GM12878 (cell line): ENCODE measurements at regions of chr3 and their contacts with region 1.

Region 1: DNA sequence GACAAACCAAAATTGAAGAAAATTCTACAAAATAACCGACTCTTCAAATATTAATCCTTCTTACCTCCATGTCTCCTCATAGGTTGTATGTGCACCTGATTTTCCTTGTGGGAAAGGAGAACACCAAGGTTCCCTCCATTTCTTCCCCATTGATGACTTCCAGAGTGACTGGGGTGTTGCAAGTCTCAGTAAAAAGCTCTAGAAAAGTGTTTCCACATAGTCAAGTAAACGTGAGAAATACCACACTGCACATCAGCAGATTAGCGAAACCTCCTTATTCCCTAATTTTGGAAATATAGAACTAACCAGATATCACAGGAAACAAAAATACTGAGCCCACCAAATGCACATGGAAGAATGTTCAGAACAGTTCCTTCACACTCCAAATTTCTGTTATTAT is 4.9 kb upstream of the RPN1 start:
- DNase-seq: no peak
- ATAC-seq: no peak
- H3K4me3 ChIP-seq: no peak overlapping the region
- H3K27ac ChIP-seq: no peak overlapping the region
- H3K4me1 ChIP-seq: no peaks in the 10 kb centered on the region
- H3K27me3 ChIP-seq: no peaks in the 10 kb centered on the region
- CTCF ChIP-seq: no peak
- EP300 ChIP-seq: no peak
- POLR2A ChIP-seq: no peak
- RAD21 ChIP-seq: no peak

Region 2: DNA sequence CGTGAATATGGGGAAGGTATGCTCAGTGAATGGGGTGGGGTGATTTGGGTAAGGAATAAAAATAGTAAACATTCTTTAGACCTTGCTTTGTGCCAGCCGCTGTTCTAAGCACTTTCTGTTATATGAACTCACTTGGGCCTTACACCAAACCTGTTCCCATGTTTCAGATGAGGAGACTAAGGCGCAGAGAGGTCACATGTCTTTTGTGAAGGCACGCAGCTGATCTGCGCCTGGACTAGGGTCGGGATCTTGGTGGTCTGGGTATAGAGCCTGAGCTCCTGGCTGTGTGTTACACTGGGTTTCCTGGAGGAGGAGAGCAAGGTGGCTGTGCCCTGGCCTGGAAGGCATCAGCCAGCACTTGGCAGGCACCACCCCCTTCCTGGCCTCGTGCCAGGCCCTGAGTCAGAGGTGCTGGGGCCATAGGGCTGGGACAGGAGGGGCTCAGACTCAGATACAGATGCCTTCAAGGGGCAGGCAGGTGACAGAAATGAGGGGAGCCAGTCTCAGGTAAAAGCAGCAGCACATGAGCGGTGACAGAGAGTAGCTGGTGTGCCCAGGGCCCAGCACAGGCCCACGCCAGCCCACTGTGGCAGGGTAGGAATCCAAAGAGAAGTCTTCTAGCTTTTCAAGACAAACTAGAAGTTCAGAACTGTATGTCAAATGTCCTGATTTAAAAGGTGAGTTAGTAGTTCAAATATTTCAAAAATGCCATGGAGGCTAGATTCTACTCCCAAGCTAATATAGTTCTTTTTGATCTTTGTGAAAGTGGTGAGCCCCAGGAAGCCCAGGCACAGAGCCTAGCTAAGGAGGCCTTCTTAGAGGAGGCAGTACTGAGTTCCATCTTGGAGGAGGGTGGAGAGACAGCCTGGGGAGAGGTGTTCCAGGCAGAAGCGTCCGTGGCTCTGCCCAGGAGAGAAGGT is 272.0 kb before region 1 on chr3:
- CTCF ChIA-PET with region 1: no interaction called
- POLR2A ChIA-PET with region 1: no interaction called
- RAD21 ChIA-PET with region 1: no interaction called
- SMC1A ChIA-PET with region 1: no interaction called
- in situ Hi-C with region 1: no loop called
- intact Hi-C with region 1: no loop called
- DNase-seq: no peak
- ATAC-seq: no peak; the same call in 2 of the 3 replicates
- H3K4me3 ChIP-seq: no peak overlapping the region
- H3K27ac ChIP-seq: no peak overlapping the region
- H3K4me1 ChIP-seq: no peaks in the 10 kb centered on the region
- H3K27me3 ChIP-seq: no peaks in the 10 kb centered on the region
- CTCF ChIP-seq: no peak
- EP300 ChIP-seq: no peak
- POLR2A ChIP-seq: no peak
- RAD21 ChIP-seq: no peak

Region 3: DNA sequence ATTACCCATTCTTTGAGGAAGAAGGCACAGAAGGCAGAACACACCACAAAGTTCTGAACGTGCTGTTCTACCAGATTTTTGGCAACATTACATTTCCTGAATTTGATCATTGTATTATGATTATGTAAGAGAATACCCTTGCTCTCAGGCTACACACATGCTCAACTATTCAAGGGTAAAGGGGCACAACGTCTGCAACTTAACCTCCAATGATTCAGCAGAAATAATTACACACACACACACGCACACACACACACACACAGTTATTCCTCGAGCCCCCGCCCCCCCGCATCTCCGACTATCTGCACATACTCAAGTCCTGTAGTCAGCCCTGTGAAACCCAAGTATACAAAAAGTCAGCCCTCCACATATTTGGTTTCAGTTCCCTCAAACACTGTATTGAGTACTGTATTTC is 31.8 kb before region 1 on chr3:
- CTCF ChIA-PET with region 1: interaction called, 3 read pairs
- POLR2A ChIA-PET with region 1: no interaction called
- RAD21 ChIA-PET with region 1: no interaction called
- SMC1A ChIA-PET with region 1: interaction called, 3 read pairs
- in situ Hi-C with region 1: no loop called
- intact Hi-C with region 1: loop called (anchors 1 kb)
- DNase-seq: no peak
- ATAC-seq: no peak
- H3K4me3 ChIP-seq: no peak overlapping the region
- H3K27ac ChIP-seq: no peak overlapping the region
- H3K4me1 ChIP-seq: peaks cover 5% of the 10 kb centered on the region
- H3K27me3 ChIP-seq: no peaks in the 10 kb centered on the region
- CTCF ChIP-seq: no peak
- EP300 ChIP-seq: no peak
- POLR2A ChIP-seq: no peak
- RAD21 ChIP-seq: no peak

Region 4: GRCh38 chr3:128714887-128715491 is 59.5 kb after region 1 on chr3:
- CTCF ChIA-PET with region 1: no interaction called
- POLR2A ChIA-PET with region 1: no interaction called
- RAD21 ChIA-PET with region 1: no interaction called
- SMC1A ChIA-PET with region 1: no interaction called
- in situ Hi-C with region 1: no loop called
- intact Hi-C with region 1: no loop called
- DNase-seq: no peak
- ATAC-seq: peak; percentile 51
- H3K4me3 ChIP-seq: no peak overlapping the region
- H3K27ac ChIP-seq: no peak overlapping the region
- H3K4me1 ChIP-seq: 0 out of 2 replicates have a peak, but pooled peaks cover 4% of the 10 kb centered on the region
- H3K27me3 ChIP-seq: no peaks in the 10 kb centered on the region
- CTCF ChIP-seq: no peak
- EP300 ChIP-seq: no peak
- POLR2A ChIP-seq: no peak
- RAD21 ChIP-seq: no peak